Mammary epithelial cell (primary cell): ENCODE measurements at regions of chr3 and their contacts with region 1.

Region 1: GRCh38 chr3:57451150-57451846 is 92.8 kb downstream of the DNAH12 start:
- DNase-seq: no peak
- H3K4me3 ChIP-seq: no peak overlapping the region
- H3K27ac ChIP-seq: no peak overlapping the region
- H3K4me1 ChIP-seq: no peaks in the 10 kb centered on the region
- H3K27me3 ChIP-seq: peaks cover under 1% of the 10 kb centered on the region
- CTCF ChIP-seq: no peak

Region 2: GRCh38 chr3:57047974-57048671 is 403.2 kb before region 1 on chr3:
- CTCF ChIA-PET with region 1: no interaction called
- dilution Hi-C with region 1: no loop called
- in situ Hi-C with region 1: no loop called
- intact Hi-C with region 1: no loop called
- DNase-seq: no peak
- H3K4me3 ChIP-seq: no peak overlapping the region
- H3K27ac ChIP-seq: no peak overlapping the region
- H3K4me1 ChIP-seq: peaks cover 13% of the 10 kb centered on the region
- H3K27me3 ChIP-seq: no peaks in the 10 kb centered on the region
- CTCF ChIP-seq: no peak

Region 3: GRCh38 chr3:57484563-57484962 is 33.3 kb after region 1 on chr3:
- CTCF ChIA-PET with region 1: no interaction called
- dilution Hi-C with region 1: loop called (anchors 5 kb)
- in situ Hi-C with region 1: no loop called
- intact Hi-C with region 1: no loop called
- DNase-seq: no peak
- H3K4me3 ChIP-seq: no peak overlapping the region
- H3K27ac ChIP-seq: no peak overlapping the region
- H3K4me1 ChIP-seq: no peaks in the 10 kb centered on the region
- H3K27me3 ChIP-seq: no peaks in the 10 kb centered on the region
- CTCF ChIP-seq: no peak

Region 4: GRCh38 chr3:57530071-57530608 is 78.8 kb after region 1 on chr3:
- CTCF ChIA-PET with region 1: no interaction called
- dilution Hi-C with region 1: no loop called
- in situ Hi-C with region 1: no loop called
- intact Hi-C with region 1: no loop called
- DNase-seq: no peak
- H3K4me3 ChIP-seq: no peak overlapping the region
- H3K27ac ChIP-seq: no peak overlapping the region
- H3K4me1 ChIP-seq: no peaks in the 10 kb centered on the region
- H3K27me3 ChIP-seq: no peaks in the 10 kb centered on the region
- CTCF ChIP-seq: no peak

Region 5: GRCh38 chr3:57793737-57794187 is 342.5 kb after region 1 on chr3:
- CTCF ChIA-PET with region 1: no interaction called
- dilution Hi-C with region 1: no loop called
- in situ Hi-C with region 1: no loop called
- intact Hi-C with region 1: no loop called
- DNase-seq: peak; percentile 19
- H3K4me3 ChIP-seq: no peak overlapping the region
- H3K27ac ChIP-seq: no peak overlapping the region
- H3K4me1 ChIP-seq: peaks cover 12% of the 10 kb centered on the region
- H3K27me3 ChIP-seq: no peaks in the 10 kb centered on the region
- CTCF ChIP-seq: no peak

Region 6: DNA sequence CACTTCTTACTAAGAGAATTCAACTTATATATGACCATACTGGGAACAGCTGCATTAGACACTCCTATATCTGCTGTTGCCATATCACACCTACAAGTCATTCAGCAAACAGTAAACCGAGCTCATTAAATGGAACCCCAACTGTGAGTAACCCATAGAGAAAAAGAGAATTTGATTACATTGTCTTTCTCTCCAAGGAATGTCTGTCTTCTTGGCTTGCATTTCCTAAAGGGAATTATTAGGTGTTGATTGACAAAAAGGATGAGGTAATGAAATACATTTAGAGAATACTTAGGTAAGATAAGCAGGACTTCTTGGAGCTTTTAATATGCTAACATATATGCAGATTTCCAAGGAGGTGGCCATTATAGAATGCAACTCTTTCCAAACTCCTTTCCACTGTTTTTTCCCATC is 381.6 kb after region 1 on chr3:
- CTCF ChIA-PET with region 1: no interaction called
- dilution Hi-C with region 1: no loop called
- in situ Hi-C with region 1: no loop called
- intact Hi-C with region 1: no loop called
- DNase-seq: no peak
- H3K4me3 ChIP-seq: no peak overlapping the region
- H3K27ac ChIP-seq: no peak overlapping the region
- H3K4me1 ChIP-seq: peaks cover 5% of the 10 kb centered on the region
- H3K27me3 ChIP-seq: no peaks in the 10 kb centered on the region
- CTCF ChIP-seq: no peak